Aorta (tissue), 5 donors: ENCODE measurements at regions of chr12 and their contacts with region 1.

Region 1: GRCh38 chr12:2583091-2583497 is 211.7 kb upstream of the FKBP4 start:
- DNase-seq: peak; percentile 76 to 93
- ATAC-seq: peak; percentile 90
- H3K4me3 ChIP-seq: no peak overlapping the region
- H3K27ac ChIP-seq: no peak overlapping the region
- H3K4me1 ChIP-seq: no peaks in the 10 kb centered on the region
- H3K27me3 ChIP-seq: no peaks in the 10 kb centered on the region

Region 2: DNA sequence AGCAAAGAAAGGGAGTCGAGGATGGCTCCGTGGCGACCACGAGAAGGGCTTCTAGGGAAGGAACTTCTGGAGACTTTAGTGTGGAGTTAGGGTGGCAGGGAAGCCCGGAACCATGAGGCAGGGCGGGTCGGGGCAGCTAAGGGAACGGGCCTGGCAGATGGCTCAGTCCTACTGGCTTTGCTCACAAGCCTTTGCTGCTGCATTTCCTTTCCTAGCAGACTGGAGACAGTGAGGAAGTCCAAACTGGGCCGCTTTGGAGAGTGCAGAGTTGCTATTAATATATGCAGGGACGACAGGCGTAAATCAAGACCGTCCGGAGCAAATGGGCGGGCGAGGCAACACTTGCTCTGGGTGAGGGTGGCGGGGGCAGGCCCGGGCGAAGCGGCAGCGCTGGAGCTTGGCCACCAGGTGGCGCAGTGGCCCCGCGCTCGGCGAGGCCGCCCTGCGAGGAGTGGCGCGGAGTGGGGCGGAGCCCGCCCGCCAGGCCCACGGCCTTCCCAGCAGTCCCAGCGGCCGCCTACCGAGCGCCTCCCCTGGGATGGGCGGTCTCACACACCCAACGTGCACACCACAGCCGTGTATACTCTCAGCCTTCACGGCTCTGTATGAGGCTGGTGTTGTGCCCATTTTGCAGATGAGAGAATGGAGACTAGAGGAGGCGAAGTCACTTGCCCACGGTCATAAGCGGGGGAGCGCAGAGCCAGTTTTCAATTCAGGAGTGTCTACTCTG is 787.1 kb before region 1 on chr12:
- intact Hi-C with region 1: loop called (anchors 10 kb)
- DNase-seq: peak; percentile 97 to 98
- ATAC-seq: peak; percentile 96
- H3K4me3 ChIP-seq: peak overlapping the region; percentile 29
- H3K27ac ChIP-seq: no peak overlapping the region
- H3K4me1 ChIP-seq: no peaks in the 10 kb centered on the region
- H3K27me3 ChIP-seq: no peaks in the 10 kb centered on the region

Region 3: GRCh38 chr12:2034633-2035430 is 548.3 kb before region 1 on chr12:
- intact Hi-C with region 1: loop called in 1 of 2 experiments (anchors 5 kb)
- DNase-seq: peak; percentile 92 to 98
- ATAC-seq: peak; percentile 95
- H3K4me3 ChIP-seq: no peak overlapping the region
- H3K27ac ChIP-seq: no peak overlapping the region
- H3K4me1 ChIP-seq: no peaks in the 10 kb centered on the region
- H3K27me3 ChIP-seq: no peaks in the 10 kb centered on the region

Region 4: DNA sequence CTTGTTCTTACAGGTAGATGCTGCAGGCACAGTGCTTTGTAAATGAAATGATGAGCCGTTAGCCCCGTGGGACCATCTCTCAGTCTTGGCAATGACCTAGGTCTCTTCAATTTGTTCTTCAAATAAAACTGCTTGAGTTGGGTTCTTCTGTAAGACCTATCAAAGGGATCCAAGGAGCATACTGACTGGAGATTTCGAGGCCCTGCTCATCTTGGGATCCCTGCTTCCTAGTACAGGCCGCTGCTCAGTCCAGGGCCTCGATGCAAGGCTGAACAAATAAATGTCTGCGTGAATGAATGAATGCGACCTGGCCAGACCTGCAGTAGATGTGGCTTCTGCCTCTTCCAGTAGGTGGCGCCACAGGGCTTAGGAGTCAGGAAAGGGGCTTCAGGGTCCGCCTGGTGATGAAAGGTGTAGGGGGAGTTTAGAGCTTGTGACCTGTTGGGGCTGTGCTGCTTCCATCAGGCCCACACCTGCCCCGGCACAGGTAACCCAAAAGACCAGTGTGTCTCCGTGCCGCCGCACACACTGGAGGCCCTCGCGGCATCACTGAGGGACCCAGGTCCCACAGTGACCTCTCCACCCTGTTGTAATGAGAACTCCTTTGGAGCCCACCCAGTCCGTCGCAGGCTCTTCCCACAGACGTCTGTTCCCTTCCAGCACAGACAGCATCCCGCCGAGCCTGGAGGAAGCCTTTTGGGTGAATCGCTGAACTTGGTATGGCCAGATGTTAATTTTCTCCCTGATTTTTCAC is 525.9 kb before region 1 on chr12:
- intact Hi-C with region 1: loop called (anchors 5 kb)
- DNase-seq: peak; percentile 73 to 88
- ATAC-seq: peak; percentile 37
- H3K4me3 ChIP-seq: no peak overlapping the region
- H3K27ac ChIP-seq: peak overlapping the region; percentile 3 to 15
- H3K4me1 ChIP-seq: no peaks in the 10 kb centered on the region
- H3K27me3 ChIP-seq: no peaks in the 10 kb centered on the region

Region 5: DNA sequence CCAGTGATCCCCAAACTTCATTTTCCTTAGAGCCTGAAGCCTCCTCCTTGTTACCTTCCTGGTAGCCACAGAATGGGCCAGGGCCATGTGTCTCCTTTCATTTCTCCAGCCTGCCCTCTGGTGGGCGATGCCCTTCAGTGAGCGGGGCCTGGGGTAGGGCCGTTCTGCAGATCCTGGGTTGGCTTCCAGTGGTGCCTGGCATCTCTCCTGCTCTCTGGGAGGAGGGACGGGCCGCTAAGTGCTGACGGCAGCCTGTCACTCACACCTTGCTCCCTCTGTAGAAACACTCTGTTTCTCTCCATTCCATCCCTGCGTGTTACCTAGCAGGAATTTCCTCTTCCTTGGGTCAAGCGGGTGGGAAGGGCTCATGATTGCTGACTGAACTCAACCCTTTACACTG is 298.2 kb before region 1 on chr12:
- intact Hi-C with region 1: loop called in 1 of 2 experiments (anchors 10 kb)
- DNase-seq: peak; percentile 85 to 92
- ATAC-seq: peak; percentile 79
- H3K4me3 ChIP-seq: no peak overlapping the region
- H3K27ac ChIP-seq: peak overlapping the region in 1 of 2 donors; percentile 60
- H3K4me1 ChIP-seq: peaks cover 3 to 20% of the 10 kb centered on the region in 2 donors
- H3K27me3 ChIP-seq: no peaks in the 10 kb centered on the region

Region 6: GRCh38 chr12:2387103-2387834 is 195.8 kb before region 1 on chr12:
- intact Hi-C with region 1: loop called in 1 of 2 experiments (anchors 5 kb)
- DNase-seq: no peak
- ATAC-seq: no peak
- H3K4me3 ChIP-seq: no peak overlapping the region
- H3K27ac ChIP-seq: no peak overlapping the region
- H3K4me1 ChIP-seq: peaks cover 2 to 3% of the 10 kb centered on the region in 2 donors
- H3K27me3 ChIP-seq: no peaks in the 10 kb centered on the region